GM13976 (cell line): ENCODE measurements at regions of chr19 and their contacts with region 1.

Region 1: GRCh38 chr19:19531951-19532805 is 3.5 kb downstream of the YJEFN3 start:
- DNase-seq: peak; percentile 86
- CTCF ChIP-seq: peak; percentile 96

Region 2: DNA sequence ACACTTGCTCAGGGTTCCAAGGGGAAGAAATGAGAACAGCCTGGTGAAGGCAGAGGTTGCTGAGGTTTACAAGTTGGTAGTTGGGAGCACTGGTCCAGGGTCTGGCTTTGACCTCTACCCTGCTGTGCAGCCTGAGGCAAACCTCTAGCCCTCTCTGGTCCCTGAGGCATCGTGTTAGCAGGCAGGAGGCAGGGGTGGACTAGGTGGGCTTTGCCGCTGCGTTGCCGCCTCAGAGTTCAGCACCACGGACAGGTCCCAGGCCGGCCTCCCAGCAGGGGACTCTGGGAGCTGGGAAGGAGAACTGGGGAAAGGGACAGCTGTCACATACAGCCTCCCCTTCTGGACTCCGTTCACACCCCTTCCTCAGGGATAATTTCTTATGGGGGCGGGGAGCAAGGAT is 317.3 kb before region 1 on chr19:
- in situ Hi-C with region 1: no loop called
- DNase-seq: peak; percentile 69
- CTCF ChIP-seq: no peak

Region 3: GRCh38 chr19:19224852-19225494 is 307.2 kb before region 1 on chr19:
- in situ Hi-C with region 1: no loop called
- DNase-seq: peak; percentile 92
- CTCF ChIP-seq: peak; percentile 79

Region 4: DNA sequence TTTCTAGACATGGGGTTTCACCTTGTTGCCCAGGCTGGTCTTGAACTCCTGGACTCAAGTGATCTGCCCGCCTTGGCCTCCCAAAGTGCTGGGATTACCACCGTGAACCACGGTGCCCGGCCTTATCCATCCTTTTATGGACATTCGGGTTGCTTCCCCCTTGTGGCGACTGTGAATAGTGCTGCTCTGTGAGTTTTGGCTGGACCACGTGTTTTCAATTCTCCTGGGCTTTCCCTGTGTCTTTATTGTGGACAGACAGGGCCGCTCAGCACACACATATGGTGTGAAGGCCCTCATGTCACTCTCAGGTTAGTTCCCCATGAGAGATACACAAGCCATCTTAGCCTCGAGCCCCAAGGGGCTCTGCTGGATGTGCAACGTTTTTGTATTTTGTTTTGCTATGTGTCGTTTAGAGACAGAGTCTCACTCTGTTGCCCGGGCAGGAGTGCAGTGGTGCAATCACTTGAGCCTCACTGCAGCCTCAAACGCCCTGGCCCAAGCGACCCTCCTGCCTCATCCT is 171.0 kb before region 1 on chr19:
- in situ Hi-C with region 1: no loop called
- DNase-seq: peak; percentile 86
- CTCF ChIP-seq: peak; percentile 73

Region 5: DNA sequence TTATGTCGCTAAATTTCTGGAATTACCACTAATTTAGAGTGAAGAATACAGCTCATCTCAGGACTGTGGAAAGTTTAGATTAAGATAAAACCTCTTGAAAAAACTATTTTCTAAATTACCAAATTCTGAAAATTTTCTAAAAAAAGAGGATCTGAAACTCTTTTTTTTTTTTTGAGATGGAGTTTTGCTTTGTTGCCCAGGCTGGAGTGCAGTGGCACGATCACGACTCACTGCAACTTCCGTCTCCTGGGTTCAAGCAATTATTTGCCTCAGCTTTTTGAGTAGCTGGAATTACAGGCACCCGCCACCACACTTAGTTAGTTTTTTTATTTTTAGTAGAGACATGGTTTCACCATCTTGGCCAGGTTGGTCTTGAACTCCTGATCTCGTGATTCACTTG is 316.9 kb after region 1 on chr19:
- in situ Hi-C with region 1: no loop called
- DNase-seq: no peak
- CTCF ChIP-seq: no peak

Region 6: GRCh38 chr19:19956434-19957075 is 424.4 kb after region 1 on chr19:
- in situ Hi-C with region 1: loop called (anchors 10 kb)
- DNase-seq: no peak
- CTCF ChIP-seq: no peak

Region 7: GRCh38 chr19:20278342-20278741 is 746.2 kb after region 1 on chr19:
- in situ Hi-C with region 1: loop called (anchors 25 kb)
- DNase-seq: peak; percentile 14
- CTCF ChIP-seq: peak; percentile 38